Spleen (tissue), 13 donors: ENCODE measurements at regions of chr22 and their contacts with region 1.

Region 1: GRCh38 chr22:31345331-31346254 is 553 bp downstream of the PATZ1 start:
- DNase-seq: peak; percentile 96
- H3K4me3 ChIP-seq: peak overlapping the region; percentile 67 to 84 (median 80)
- H3K27ac ChIP-seq: peak overlapping the region; percentile 72 to 96 (median 86)
- H3K4me1 ChIP-seq: peaks cover 40 to 72% (median 65%) of the 10 kb centered on the region in 6 donors
- H3K27me3 ChIP-seq: no peaks in the 10 kb centered on the region
- CTCF ChIP-seq: peak; percentile 75 to 96 (median 88)
- POLR2A ChIP-seq: no peak

Region 2: GRCh38 chr22:31399211-31400028 is 53.8 kb after region 1 on chr22 and contains the start of gene DRG1:
- intact Hi-C with region 1: loop called (anchors 5 kb)
- DNase-seq: peak; percentile 99
- H3K4me3 ChIP-seq: peak within 1 kb of the TSS; percentile 64 to 96 (median 81)
- H3K27ac ChIP-seq: peak within 1 kb of the TSS; percentile 73 to 91 (median 84)
- H3K4me1 ChIP-seq: peaks cover 9 to 48% (median 22%) of the 10 kb centered on the region in 6 donors
- H3K27me3 ChIP-seq: no peaks in the 10 kb centered on the region
- CTCF ChIP-seq: peak in 8 of 11 experiments; percentile 12 to 53 (median 40)
- POLR2A ChIP-seq: peak; percentile 66 to 92 (median 89)
- total RNA-seq, gene DRG1: 33.4 to 48.6 (median 41.7) TPM

Region 3: DNA sequence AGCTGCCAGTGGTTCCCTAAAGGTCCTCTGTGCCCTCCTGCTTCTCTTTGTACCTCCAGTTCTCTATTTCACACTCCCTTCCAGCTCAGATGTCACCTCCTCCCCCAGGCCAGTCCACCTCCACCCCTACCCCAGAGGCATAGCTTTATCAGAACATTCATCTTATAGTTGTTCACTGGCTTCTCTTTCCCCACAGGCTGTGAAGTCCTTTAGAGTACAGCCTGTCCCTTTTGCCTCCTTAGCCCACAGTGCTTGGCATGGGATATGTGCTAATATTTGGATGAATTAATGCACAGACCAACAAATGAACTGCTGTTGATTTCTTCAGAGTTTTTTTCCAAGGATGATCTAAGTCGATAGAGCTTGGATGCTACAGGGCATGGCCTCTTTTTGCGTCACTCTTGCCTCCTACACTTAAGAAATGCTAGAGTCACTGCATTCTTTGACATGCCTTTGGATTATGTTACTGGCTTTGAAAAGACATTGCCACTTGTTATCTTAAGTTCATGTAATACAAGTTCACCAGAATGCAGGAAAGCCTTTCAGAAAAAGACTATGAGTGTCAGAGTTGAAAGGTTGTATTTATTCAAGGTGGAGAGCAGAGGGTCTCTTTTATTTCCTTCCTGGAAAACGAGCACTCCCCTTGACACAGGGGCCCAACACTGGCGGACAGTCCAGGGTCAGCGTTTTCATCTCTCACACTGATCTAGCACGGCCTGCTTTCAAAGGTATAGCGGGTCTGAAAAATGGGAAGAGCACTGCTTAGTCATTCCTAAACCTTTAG is 240.7 kb after region 1 on chr22:
- intact Hi-C with region 1: no loop called
- DNase-seq: no peak
- H3K4me3 ChIP-seq: no peak overlapping the region
- H3K27ac ChIP-seq: peak overlapping the region in 7 of 8 donors; percentile 6 to 69 (median 55)
- H3K4me1 ChIP-seq: peaks cover 0 to 48% (median 19%) of the 10 kb centered on the region in 6 donors
- H3K27me3 ChIP-seq: no peaks in the 10 kb centered on the region
- CTCF ChIP-seq: no peak
- POLR2A ChIP-seq: no peak